ENCODE measurements at regions of chr3 and their contacts with region 1.

Region 1: GRCh38 chr3:169668957-169669681 is 5.6 kb upstream of the MECOM start:
- DNase-seq: peak in 4 of 14 experiments; percentile 34 to 53 (median 46)
- ATAC-seq: peak; percentile 59
- H3K4me3 ChIP-seq: no peak overlapping the region
- H3K4me3 Mint-ChIP-seq: no peak overlapping the region
- H3K27ac ChIP-seq: no peak overlapping the region
- H3K27ac Mint-ChIP-seq: no peak overlapping the region
- H3K4me1 ChIP-seq: peaks cover 19% of the 10 kb centered on the region
- H3K4me1 Mint-ChIP-seq: peaks cover 35% of the 10 kb centered on the region
- H3K27me3 ChIP-seq: peaks cover 61 to 88% of the 10 kb centered on the region in 2 experiments
- H3K27me3 Mint-ChIP-seq: peaks cover 100% of the 10 kb centered on the region
- CTCF ChIP-seq: no peak

Region 2: GRCh38 chr3:169149349-169149890 is 519.7 kb before region 1 on chr3:
- CTCF ChIA-PET with region 1: no interaction called
- POLR2A ChIA-PET with region 1: no interaction called
- intact Hi-C with region 1: loop called (anchors 5 to 10 kb)
- DNase-seq: peak; percentile 32 to 75 (median 50)
- ATAC-seq: peak; percentile 92
- H3K4me3 ChIP-seq: no peak overlapping the region
- H3K4me3 Mint-ChIP-seq: no peak overlapping the region
- H3K27ac ChIP-seq: no peak overlapping the region
- H3K27ac Mint-ChIP-seq: no peak overlapping the region
- H3K4me1 ChIP-seq: peaks cover 24% of the 10 kb centered on the region
- H3K4me1 Mint-ChIP-seq: peaks cover 25% of the 10 kb centered on the region
- H3K27me3 ChIP-seq: peaks cover 39 to 69% of the 10 kb centered on the region in 2 experiments
- H3K27me3 Mint-ChIP-seq: peaks cover 87% of the 10 kb centered on the region
- CTCF ChIP-seq: peak; percentile 65

Region 3: GRCh38 chr3:169699536-169700050 is 30.5 kb after region 1 on chr3:
- CTCF ChIA-PET with region 1: no interaction called
- POLR2A ChIA-PET with region 1: no interaction called
- intact Hi-C with region 1: no loop called
- DNase-seq: no peak
- ATAC-seq: no peak
- H3K4me3 ChIP-seq: no peak overlapping the region
- H3K4me3 Mint-ChIP-seq: no peak overlapping the region
- H3K27ac ChIP-seq: no peak overlapping the region
- H3K27ac Mint-ChIP-seq: no peak overlapping the region
- H3K4me1 ChIP-seq: no peaks in the 10 kb centered on the region
- H3K4me1 Mint-ChIP-seq: no peaks in the 10 kb centered on the region
- H3K27me3 ChIP-seq: peaks cover 0 to 4% of the 10 kb centered on the region in 2 experiments
- H3K27me3 Mint-ChIP-seq: peaks cover 53% of the 10 kb centered on the region
- CTCF ChIP-seq: no peak

Measured in CD4-positive, alpha-beta T cell (primary cell).